Caco-2 (cell line): ENCODE measurements at regions of chr9 and their contacts with region 1.

Region 1: GRCh38 chr9:83937911-83938323 is 16.7 kb upstream of the KIF27 start:
- DNase-seq: peak in 1 of 2 experiments; percentile 55
- H3K4me3 ChIP-seq: no peak overlapping the region
- H3K4me3 Mint-ChIP-seq: no peak overlapping the region
- H3K27ac Mint-ChIP-seq: no peak overlapping the region
- H3K4me1 ChIP-seq: no peaks in the 10 kb centered on the region
- H3K4me1 Mint-ChIP-seq: no peaks in the 10 kb centered on the region
- H3K27me3 ChIP-seq: no peaks in the 10 kb centered on the region
- H3K27me3 Mint-ChIP-seq: no peaks in the 10 kb centered on the region
- CTCF ChIP-seq: peak in 1 of 2 experiments; percentile 48

Region 2: DNA sequence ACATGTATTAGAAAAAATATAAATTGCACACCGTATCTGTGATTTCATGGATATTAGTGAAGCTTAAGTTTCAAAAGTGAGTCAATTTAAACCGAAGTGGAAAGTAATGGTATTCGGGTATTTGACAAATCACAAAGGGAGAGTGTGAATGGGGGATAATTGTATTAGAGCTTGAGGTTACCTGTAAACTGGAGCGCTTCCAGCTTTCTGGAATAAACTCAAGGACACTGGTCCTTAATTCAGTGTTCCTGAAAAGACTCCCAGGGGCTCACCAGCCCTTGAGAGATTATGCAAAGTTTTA is 235.4 kb after region 1 on chr9:
- CTCF ChIA-PET with region 1: no interaction called
- POLR2A ChIA-PET with region 1: no interaction called
- intact Hi-C with region 1: loop called (anchors 1 kb)
- DNase-seq: no peak
- H3K4me3 ChIP-seq: no peak overlapping the region
- H3K4me3 Mint-ChIP-seq: no peak overlapping the region
- H3K27ac Mint-ChIP-seq: no peak overlapping the region
- H3K4me1 ChIP-seq: no peaks in the 10 kb centered on the region
- H3K4me1 Mint-ChIP-seq: no peaks in the 10 kb centered on the region
- H3K27me3 ChIP-seq: no peaks in the 10 kb centered on the region
- H3K27me3 Mint-ChIP-seq: peaks cover 3% of the 10 kb centered on the region
- CTCF ChIP-seq: no peak

Region 3: DNA sequence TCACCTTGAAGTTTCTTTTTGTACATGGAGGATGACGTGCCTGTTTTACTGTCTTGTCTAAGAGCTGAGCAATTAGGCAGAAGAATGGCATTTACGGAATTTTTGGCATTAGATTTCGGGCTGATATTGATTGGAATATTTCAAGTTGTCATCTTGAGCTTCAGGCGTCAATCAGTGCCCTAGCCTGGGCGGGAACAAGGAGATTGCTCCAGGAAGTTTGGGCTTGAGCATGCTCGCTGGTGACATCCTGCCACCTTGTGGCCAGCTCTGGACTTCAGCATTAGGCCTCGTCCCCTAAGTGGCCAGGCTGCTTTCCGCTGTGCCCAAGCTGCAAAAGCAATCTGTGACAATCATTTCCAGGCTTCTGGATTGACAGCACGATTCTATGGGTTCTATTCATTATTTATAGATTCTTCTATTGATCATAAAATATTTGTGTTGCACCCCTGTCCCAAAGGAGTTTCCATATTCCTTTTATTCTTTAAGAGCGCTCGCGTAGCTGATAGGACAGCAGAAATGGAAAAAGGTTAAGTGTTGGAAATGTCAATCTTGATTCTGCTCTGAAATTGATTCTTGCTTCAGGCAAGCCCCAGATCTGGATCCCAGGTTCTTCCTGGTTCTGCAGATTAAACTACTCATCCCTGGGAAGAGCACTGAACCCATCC is 323.3 kb after region 1 on chr9:
- CTCF ChIA-PET with region 1: interaction called, 3 read pairs
- POLR2A ChIA-PET with region 1: no interaction called
- intact Hi-C with region 1: loop called (anchors 1 kb)
- DNase-seq: peak; percentile 63 to 67
- H3K4me3 ChIP-seq: no peak overlapping the region
- H3K4me3 Mint-ChIP-seq: no peak overlapping the region
- H3K27ac Mint-ChIP-seq: no peak overlapping the region
- H3K4me1 ChIP-seq: no peaks in the 10 kb centered on the region
- H3K4me1 Mint-ChIP-seq: no peaks in the 10 kb centered on the region
- H3K27me3 ChIP-seq: no peaks in the 10 kb centered on the region
- H3K27me3 Mint-ChIP-seq: no peaks in the 10 kb centered on the region
- CTCF ChIP-seq: peak; percentile 65 to 69

Region 4: GRCh38 chr9:84315278-84315877 is 377.5 kb after region 1 on chr9:
- CTCF ChIA-PET with region 1: no interaction called
- POLR2A ChIA-PET with region 1: no interaction called
- intact Hi-C with region 1: loop called (anchors 1 kb)
- DNase-seq: peak; percentile 32 to 38
- H3K4me3 ChIP-seq: no peak overlapping the region
- H3K4me3 Mint-ChIP-seq: no peak overlapping the region
- H3K27ac Mint-ChIP-seq: no peak overlapping the region
- H3K4me1 ChIP-seq: no peaks in the 10 kb centered on the region
- H3K4me1 Mint-ChIP-seq: no peaks in the 10 kb centered on the region
- H3K27me3 ChIP-seq: no peaks in the 10 kb centered on the region
- H3K27me3 Mint-ChIP-seq: no peaks in the 10 kb centered on the region
- CTCF ChIP-seq: peak; percentile 44 to 61